ENCODE measurements at regions of chr14 and their contacts with region 1.

Region 1: GRCh38 chr14:53306267-53306721 is 153.2 kb upstream of the DDHD1 start:
- DNase-seq: peak; percentile 7 to 61
- H3K4me3 ChIP-seq: no peak overlapping the region
- H3K27ac ChIP-seq: no peak overlapping the region
- H3K4me1 ChIP-seq: no peaks in the 10 kb centered on the region
- H3K27me3 ChIP-seq: no peaks in the 10 kb centered on the region
- CTCF ChIP-seq: peak; percentile 36 to 72 (median 68)
- EP300 ChIP-seq: no peak
- POLR2A ChIP-seq: no peak
- RAD21 ChIP-seq: peak; percentile 87 to 92

Region 2: DNA sequence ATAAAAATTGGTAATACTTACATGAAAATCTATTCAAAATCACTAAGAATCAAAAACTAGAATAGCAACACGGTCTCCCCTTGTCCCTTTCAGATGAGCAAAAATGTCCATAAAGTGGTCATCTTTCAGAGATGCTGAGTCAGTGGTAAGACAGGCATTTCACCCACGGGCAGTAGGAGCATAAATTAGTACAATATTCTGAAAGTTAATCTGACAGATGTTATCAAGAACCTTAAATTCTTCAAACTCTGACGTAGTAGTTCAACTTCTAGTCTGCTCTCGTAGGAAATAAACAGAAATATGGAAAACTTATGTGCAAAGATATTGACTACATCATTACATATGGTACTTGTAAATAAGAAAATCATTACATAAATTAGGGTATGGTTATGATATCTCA is 481.8 kb before region 1 on chr14:
- CTCF ChIA-PET with region 1: interaction called, 11 read pairs
- POLR2A ChIA-PET with region 1: no interaction called
- DNase-seq: no peak
- H3K4me3 ChIP-seq: no peak overlapping the region
- H3K27ac ChIP-seq: no peak overlapping the region
- H3K4me1 ChIP-seq: no peaks in the 10 kb centered on the region; a peak in 2 of 7 replicates
- H3K27me3 ChIP-seq: no peaks in the 10 kb centered on the region
- CTCF ChIP-seq: no peak
- EP300 ChIP-seq: no peak
- POLR2A ChIP-seq: no peak
- RAD21 ChIP-seq: no peak

Region 3: DNA sequence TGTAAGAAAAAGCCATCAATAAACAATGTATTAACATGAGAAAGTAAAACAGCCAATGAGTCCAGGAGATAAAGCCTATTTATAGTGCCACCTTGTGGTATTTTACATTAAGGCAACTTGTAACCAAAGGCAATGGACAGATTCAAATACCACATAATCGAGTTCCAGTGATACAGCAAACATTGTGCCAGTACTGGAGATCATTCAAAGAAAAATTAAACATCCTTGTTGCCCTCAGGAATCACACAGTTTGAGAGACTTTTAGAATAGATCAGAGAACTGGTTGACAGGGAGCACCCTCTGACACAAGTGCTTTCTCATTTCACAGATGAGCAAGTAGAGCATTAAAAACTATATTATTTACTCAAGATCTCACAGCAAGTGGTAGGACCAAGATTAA is 251.3 kb before region 1 on chr14:
- CTCF ChIA-PET with region 1: interaction called, 11 read pairs
- POLR2A ChIA-PET with region 1: no interaction called
- DNase-seq: no peak
- H3K4me3 ChIP-seq: no peak overlapping the region
- H3K27ac ChIP-seq: no peak overlapping the region
- H3K4me1 ChIP-seq: no peaks in the 10 kb centered on the region
- H3K27me3 ChIP-seq: no peaks in the 10 kb centered on the region
- CTCF ChIP-seq: peak in 2 of 3 experiments; percentile 52 to 68; a peak in 2 of 4 replicates
- EP300 ChIP-seq: no peak
- POLR2A ChIP-seq: no peak
- RAD21 ChIP-seq: peak; percentile 74 to 79

Region 4: GRCh38 chr14:53285805-53286204 is 20.5 kb before region 1 on chr14:
- CTCF ChIA-PET with region 1: no interaction called
- POLR2A ChIA-PET with region 1: no interaction called
- DNase-seq: no peak
- H3K4me3 ChIP-seq: no peak overlapping the region
- H3K27ac ChIP-seq: no peak overlapping the region
- H3K4me1 ChIP-seq: no peaks in the 10 kb centered on the region
- H3K27me3 ChIP-seq: no peaks in the 10 kb centered on the region
- CTCF ChIP-seq: no peak
- EP300 ChIP-seq: no peak
- POLR2A ChIP-seq: no peak
- RAD21 ChIP-seq: peak in 1 of 2 experiments; percentile 14; a peak in 1 of 4 replicates

Region 5: GRCh38 chr14:53295985-53296582 is 10.2 kb before region 1 on chr14:
- CTCF ChIA-PET with region 1: interaction called, 49 read pairs
- POLR2A ChIA-PET with region 1: no interaction called
- DNase-seq: no peak
- H3K4me3 ChIP-seq: no peak overlapping the region
- H3K27ac ChIP-seq: no peak overlapping the region
- H3K4me1 ChIP-seq: no peaks in the 10 kb centered on the region
- H3K27me3 ChIP-seq: no peaks in the 10 kb centered on the region
- CTCF ChIP-seq: peak in 2 of 3 experiments; percentile 40 to 58; a peak in 2 of 4 replicates
- EP300 ChIP-seq: no peak
- POLR2A ChIP-seq: no peak
- RAD21 ChIP-seq: peak; percentile 38 to 42; a peak in 3 of 4 replicates

Region 6: GRCh38 chr14:53316499-53316898 is 10.2 kb after region 1 on chr14:
- CTCF ChIA-PET with region 1: interaction called, 13 read pairs
- POLR2A ChIA-PET with region 1: no interaction called
- DNase-seq: no peak
- H3K4me3 ChIP-seq: no peak overlapping the region
- H3K27ac ChIP-seq: no peak overlapping the region
- H3K4me1 ChIP-seq: no peaks in the 10 kb centered on the region
- H3K27me3 ChIP-seq: no peaks in the 10 kb centered on the region
- CTCF ChIP-seq: no peak
- EP300 ChIP-seq: no peak
- POLR2A ChIP-seq: no peak
- RAD21 ChIP-seq: no peak

Region 7: DNA sequence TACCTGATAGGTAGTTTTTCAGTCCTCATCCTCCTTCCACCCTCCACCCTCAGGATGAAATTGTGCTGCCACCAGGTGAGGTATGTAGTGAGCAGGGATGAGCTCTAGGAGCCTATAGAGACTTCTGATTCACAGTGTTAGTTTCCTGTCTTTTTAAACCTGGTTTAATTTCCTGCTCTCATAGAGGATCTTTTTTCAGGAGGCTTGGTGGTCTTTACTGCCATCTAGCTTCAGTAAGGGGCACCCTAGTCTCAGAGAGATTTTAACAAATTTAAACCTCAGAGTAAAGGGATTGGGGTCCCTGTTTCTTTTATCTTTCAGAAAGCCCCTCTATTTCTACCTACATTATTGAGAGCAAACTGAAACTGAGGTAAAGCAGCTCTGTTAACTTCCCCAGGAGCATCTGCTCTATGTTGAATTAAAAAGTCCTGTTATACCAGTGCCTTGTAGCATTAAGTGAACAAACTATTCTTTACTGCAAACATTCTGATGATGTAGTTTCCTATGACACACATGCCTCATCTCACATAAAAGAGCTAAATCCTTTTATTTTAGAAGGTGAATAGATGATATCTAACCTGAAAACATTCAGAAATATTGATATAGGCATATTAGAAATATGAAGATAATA is 19.0 kb after region 1 on chr14:
- CTCF ChIA-PET with region 1: interaction called, 20 read pairs
- POLR2A ChIA-PET with region 1: no interaction called
- DNase-seq: no peak
- H3K4me3 ChIP-seq: no peak overlapping the region
- H3K27ac ChIP-seq: no peak overlapping the region
- H3K4me1 ChIP-seq: peaks cover 0 to 4% (median 1%) of the 10 kb centered on the region in 4 experiments; a peak in 3 of 7 replicates
- H3K27me3 ChIP-seq: no peaks in the 10 kb centered on the region
- CTCF ChIP-seq: peak in 2 of 3 experiments; percentile 52; a peak in 3 of 4 replicates
- EP300 ChIP-seq: no peak
- POLR2A ChIP-seq: no peak
- RAD21 ChIP-seq: peak; percentile 65 to 71